SK-N-SH (cell line): ENCODE measurements at regions of chr2 and their contacts with region 1.

Region 1: DNA sequence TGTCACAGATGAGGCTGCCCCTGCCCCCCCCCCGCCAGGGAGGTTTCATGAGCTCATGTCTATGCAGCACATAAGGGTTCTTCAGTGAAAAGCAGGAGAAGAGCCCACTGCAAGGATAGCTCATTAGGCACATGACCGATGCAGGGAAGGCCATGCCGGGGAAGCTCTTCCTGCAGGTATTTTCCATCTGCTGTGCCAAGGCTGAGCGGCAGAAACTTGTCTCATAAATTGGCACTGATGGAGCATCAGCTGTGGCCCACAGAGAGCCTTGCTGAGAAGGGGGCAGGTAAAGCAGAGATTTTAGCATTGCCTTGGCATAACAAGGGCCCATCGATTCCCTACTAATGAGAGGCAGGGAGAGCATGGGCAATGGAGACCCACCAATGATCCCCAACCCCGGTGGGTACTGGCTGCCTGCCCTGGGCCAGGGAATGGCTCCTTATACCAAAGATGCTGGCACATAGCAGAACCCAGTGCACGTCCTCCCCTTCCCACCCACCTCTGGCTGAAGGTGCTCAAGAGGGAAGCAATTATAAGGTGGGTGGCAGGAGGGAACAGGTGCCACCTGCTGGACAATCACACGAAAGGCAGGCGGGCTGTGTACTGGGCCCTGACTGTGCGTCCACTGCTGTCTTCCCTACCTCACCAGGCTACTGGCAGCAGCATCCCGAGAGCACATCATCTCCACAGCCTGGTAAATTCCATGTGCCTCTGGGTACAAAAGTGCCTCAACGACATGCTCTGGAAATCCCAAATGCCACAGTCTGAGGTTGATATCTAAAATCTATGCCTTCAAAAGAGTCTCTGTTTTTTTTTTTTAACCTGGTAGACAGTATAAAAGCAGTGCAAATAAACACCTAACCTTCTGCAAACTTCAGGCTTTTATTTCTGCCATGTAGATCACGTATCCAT is 41.4 kb downstream of the STEAP3 start:
- DNase-seq: peak; percentile 75
- H3K4me3 ChIP-seq: no peak overlapping the region; a peak in 1 of 4 replicates
- H3K27ac ChIP-seq: no peak overlapping the region
- H3K4me1 ChIP-seq: no peaks in the 10 kb centered on the region
- H3K27me3 ChIP-seq: no peaks in the 10 kb centered on the region
- CTCF ChIP-seq: peak; percentile 78
- EP300 ChIP-seq: no peak
- RAD21 ChIP-seq: peak; percentile 83

Region 2: GRCh38 chr2:118784860-118785259 is 480.2 kb before region 1 on chr2:
- CTCF ChIA-PET with region 1: no interaction called
- POLR2A ChIA-PET with region 1: no interaction called
- DNase-seq: no peak
- H3K4me3 ChIP-seq: no peak overlapping the region
- H3K27ac ChIP-seq: no peak overlapping the region
- H3K4me1 ChIP-seq: no peaks in the 10 kb centered on the region
- H3K27me3 ChIP-seq: peaks cover 13% of the 10 kb centered on the region
- CTCF ChIP-seq: no peak
- EP300 ChIP-seq: no peak
- RAD21 ChIP-seq: no peak

Region 3: DNA sequence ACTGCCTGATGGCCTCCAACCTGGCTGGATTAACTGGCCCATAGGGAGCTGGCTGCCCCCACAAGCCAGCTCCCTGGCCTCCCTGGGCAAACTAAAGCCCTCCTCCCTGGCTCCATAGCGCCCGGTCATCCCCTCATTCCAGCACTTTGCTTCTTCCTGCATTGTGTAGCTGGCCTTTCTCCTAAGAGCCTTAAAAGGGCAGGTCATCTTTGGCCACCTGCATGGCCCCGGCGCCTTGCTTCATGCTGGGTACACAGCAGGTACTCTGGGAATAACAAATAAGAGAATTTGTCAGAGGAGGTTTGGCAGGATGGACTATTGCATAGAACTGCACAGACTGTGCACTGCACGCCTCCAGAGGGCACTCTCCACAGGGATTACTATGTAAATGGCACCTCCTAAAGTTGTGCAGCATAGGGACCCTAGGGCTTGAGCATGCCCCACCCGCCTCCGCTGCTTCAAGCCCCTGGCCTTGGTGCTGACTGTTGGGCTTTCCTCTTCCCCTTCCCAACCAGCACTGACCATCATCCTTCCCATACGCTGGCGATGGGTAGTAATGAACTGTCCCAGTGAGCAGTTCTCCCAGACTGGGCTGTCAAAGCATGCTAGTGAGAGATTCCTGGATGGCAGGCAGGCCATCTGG is 30.5 kb before region 1 on chr2:
- CTCF ChIA-PET with region 1: interaction called, 25 read pairs
- POLR2A ChIA-PET with region 1: no interaction called
- DNase-seq: peak; percentile 49
- H3K4me3 ChIP-seq: no peak overlapping the region
- H3K27ac ChIP-seq: no peak overlapping the region
- H3K4me1 ChIP-seq: peaks cover 0 to 23% of the 10 kb centered on the region in 2 experiments; a peak in 2 of 4 replicates
- H3K27me3 ChIP-seq: no peaks in the 10 kb centered on the region
- CTCF ChIP-seq: peak; percentile 44
- EP300 ChIP-seq: no peak
- RAD21 ChIP-seq: peak; percentile 58